ENCODE measurements at regions of chr11 and their contacts with region 1.

Region 1: GRCh38 chr11:65134386-65135253 is at the start of gene SYVN1:
- DNase-seq: peak; percentile 94
- H3K4me3 Mint-ChIP-seq: peak within 1 kb of the TSS; percentile 99
- H3K27ac Mint-ChIP-seq: peak within 1 kb of the TSS; percentile 99
- H3K4me1 Mint-ChIP-seq: peaks cover 31% of the 10 kb centered on the region
- H3K27me3 Mint-ChIP-seq: no peaks in the 10 kb centered on the region
- total RNA-seq, gene SYVN1: 24.5 to 26.2 TPM

Region 2: DNA sequence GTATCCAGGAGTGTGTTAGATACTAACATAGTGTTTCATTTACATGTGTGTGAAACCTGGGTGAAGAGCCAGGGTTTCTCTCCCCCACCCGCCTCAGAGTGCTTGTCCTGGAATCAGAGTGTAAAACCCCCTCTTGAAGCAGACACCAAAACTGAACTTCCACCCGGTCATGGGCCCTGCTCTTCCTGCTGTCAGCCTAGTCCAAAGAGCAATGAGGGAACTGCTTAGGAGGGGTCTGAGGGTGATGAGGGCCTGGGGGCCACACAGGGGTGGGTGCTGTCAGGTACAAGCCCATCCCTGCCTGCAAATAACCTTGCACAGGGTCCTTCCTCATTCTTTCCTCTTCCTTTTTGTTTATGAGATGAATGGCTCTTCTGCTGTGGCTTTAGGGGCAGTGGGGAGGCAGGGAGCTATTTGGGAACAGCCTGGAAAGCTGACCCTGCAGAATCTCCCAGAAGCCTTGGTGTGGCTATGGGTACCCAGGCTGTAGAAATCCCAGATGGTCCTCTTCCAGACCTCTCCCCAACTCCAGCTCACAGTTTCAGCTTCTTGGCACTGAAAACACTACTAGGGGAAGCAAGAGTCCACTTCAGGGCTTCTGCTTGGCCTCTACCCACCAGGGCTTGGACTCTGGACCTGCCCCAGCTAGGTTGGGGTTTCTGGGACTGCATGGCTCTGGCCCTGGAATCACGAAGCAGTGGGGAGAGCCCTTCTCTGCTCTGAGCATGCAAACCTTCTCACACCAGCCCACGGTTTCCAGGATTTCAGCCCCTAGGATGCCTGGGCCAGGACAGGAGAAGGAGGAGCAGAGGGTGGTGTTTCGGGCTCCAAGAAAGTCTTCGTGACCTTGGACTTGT is 146.4 kb before region 1 on chr11:
- CTCF ChIA-PET with region 1: no interaction called
- POLR2A ChIA-PET with region 1: no interaction called
- intact Hi-C with region 1: no loop called
- DNase-seq: no peak
- H3K4me3 Mint-ChIP-seq: no peak overlapping the region
- H3K27ac Mint-ChIP-seq: no peak overlapping the region
- H3K4me1 Mint-ChIP-seq: peaks cover 13% of the 10 kb centered on the region
- H3K27me3 Mint-ChIP-seq: peaks cover 2% of the 10 kb centered on the region

Region 3: DNA sequence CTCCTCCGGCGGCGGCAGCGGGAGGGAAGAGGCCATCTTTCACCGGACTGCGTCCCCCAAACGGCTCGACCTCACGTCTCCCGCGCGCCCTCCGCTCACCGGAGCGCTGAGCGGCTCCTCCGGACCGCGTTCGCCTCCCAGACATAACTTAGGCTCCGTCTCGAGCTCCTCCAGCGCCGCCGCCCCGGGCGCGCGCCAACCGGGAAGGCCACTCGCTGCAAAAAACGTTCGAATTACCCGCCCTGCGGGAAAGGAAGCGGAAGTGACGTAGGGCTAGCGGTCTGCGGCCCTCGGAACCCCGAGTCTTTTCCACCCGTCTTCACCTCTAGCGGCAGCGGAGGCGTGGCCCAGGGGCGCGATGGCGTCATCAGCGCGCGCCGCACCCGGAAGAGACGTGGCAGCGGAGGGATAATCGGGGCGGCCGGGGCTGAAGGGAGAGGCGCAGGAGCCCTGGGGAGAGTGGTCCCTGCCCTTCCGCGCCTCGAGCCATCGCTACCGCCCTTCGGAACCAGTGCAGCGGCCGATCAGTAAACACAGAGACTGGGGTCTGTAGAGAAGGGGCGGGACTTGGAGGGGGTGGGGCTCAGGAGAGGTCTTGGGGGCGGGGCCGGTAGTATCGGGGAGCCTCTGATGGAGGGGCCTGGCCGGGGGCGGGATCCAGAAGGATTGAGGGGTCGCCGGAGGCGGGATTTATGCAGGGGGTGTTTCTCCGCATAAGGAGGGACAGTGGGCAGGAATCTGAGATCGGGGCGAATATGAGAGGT is 50.6 kb before region 1 on chr11 and contains the starts of genes CDCA5 and ZFPL1:
- CTCF ChIA-PET with region 1: no interaction called
- POLR2A ChIA-PET with region 1: no interaction called
- intact Hi-C with region 1: loop called (anchors 1 kb)
- DNase-seq: peak; percentile 97
- H3K4me3 Mint-ChIP-seq: peak within 1 kb of the TSS; percentile 99
- H3K27ac Mint-ChIP-seq: peak within 1 kb of the TSS; percentile 96
- H3K4me1 Mint-ChIP-seq: peaks cover 36% of the 10 kb centered on the region
- H3K27me3 Mint-ChIP-seq: no peaks in the 10 kb centered on the region
- total RNA-seq, gene CDCA5: 111 to 112 TPM
- total RNA-seq, gene ZFPL1: 28.3 to 31.3 TPM

Region 4: DNA sequence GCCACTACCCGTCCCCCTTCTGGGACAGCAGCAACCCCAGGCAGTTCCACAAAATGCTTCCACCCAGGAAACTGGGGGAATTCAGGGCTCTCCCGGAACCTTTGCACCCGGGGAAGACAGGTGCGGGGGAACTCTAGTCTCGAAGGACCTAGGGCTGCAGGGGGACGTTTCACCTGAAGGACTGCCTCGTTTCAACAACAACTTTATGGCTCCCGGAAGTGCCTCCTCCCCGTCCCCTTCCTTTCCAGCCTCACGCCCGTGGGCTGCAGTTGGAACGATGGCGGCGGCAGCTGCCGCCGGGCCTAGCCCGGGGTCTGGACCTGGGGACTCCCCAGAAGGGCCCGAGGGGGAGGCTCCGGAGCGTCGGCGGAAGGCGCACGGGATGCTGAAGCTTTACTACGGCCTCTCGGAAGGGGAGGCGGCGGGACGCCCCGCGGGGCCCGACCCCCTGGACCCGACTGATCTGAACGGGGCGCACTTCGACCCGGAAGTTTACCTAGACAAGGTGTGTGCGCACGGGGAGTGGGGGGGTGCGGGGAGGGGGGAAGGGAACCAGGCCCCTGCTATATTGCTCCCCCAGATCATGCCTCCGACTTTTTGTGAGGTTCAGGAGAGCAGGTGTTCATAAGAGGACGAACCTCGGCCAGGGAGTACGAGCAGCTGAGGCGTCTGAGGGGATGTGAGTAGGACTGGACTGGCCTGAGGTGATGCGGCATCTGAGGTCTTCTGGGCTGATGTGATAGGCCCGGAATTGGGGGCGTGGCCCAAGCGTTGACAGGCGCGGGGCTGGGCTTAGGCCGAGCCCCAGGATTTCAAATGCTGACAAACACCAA is 38.4 kb before region 1 on chr11 and contains the start of gene VPS51:
- CTCF ChIA-PET with region 1: no interaction called
- POLR2A ChIA-PET with region 1: interaction called, 6 read pairs
- intact Hi-C with region 1: loop called (anchors 1 kb)
- DNase-seq: peak; percentile 91
- H3K4me3 Mint-ChIP-seq: peak within 1 kb of the TSS; percentile 93
- H3K27ac Mint-ChIP-seq: peak within 1 kb of the TSS; percentile 97
- H3K4me1 Mint-ChIP-seq: peaks cover 17% of the 10 kb centered on the region
- H3K27me3 Mint-ChIP-seq: no peaks in the 10 kb centered on the region
- total RNA-seq, gene VPS51: 97.1 to 99.2 TPM

Region 5: GRCh38 chr11:65111744-65112414 is 22.7 kb before region 1 on chr11 and contains the start of gene TM7SF2:
- CTCF ChIA-PET with region 1: interaction called, 24 read pairs
- POLR2A ChIA-PET with region 1: interaction called, 15 read pairs
- intact Hi-C with region 1: loop called (anchors 2 kb)
- DNase-seq: peak; percentile 96
- H3K4me3 Mint-ChIP-seq: peak within 1 kb of the TSS; percentile 84
- H3K27ac Mint-ChIP-seq: peak within 1 kb of the TSS; percentile 80
- H3K4me1 Mint-ChIP-seq: peaks cover 56% of the 10 kb centered on the region
- H3K27me3 Mint-ChIP-seq: no peaks in the 10 kb centered on the region
- total RNA-seq, gene TM7SF2: 19.2 to 21.0 TPM

Region 6: DNA sequence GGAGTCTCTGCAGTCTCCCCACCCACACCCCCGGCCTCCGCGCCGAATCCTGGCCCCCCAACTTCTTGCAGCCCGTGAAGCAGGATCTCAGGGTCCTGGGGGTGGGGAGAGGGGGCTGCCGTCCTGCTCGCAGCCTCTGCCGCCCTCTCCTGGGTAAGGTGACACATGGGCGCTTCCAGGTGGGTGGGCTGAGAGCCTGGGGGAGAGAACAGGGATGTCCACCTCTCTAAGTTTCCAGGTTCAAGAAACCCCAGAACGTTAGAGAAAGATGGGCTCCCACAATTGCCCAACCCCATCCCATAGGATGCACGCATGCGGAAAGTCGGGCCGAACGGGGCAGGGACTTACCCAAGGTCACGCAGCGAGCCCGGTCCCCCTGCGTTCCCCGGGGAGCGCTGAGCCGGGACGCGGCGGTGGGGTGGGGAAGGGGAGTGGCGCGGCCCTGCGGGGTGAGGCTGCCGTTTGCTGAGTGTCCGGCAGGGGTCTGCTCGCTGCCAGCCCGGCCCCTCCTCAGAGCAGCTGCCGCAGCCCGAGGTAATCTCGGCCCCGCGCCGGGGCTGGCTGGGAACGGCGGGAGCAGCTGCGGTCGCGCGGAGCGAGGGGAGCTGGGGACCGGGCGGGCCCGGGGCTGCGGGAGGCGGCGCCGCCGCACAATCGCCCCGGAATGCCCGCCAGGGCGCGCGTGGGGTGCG is 46.4 kb after region 1 on chr11:
- CTCF ChIA-PET with region 1: interaction called, 18 read pairs
- POLR2A ChIA-PET with region 1: interaction called, 16 read pairs
- intact Hi-C with region 1: loop called (anchors 1 kb)
- DNase-seq: peak; percentile 74
- H3K4me3 Mint-ChIP-seq: peak overlapping the region; percentile 87
- H3K27ac Mint-ChIP-seq: no peak overlapping the region
- H3K4me1 Mint-ChIP-seq: peaks cover 20% of the 10 kb centered on the region
- H3K27me3 Mint-ChIP-seq: no peaks in the 10 kb centered on the region

Region 7: GRCh38 chr11:65261591-65262380 is 127.2 kb after region 1 on chr11 and contains the start of gene POLA2:
- CTCF ChIA-PET with region 1: no interaction called
- POLR2A ChIA-PET with region 1: interaction called, 14 read pairs
- intact Hi-C with region 1: loop called (anchors 10 kb)
- DNase-seq: peak; percentile 98
- H3K4me3 Mint-ChIP-seq: peak within 1 kb of the TSS; percentile 94
- H3K27ac Mint-ChIP-seq: peak within 1 kb of the TSS; percentile 94
- H3K4me1 Mint-ChIP-seq: peaks cover 36% of the 10 kb centered on the region
- H3K27me3 Mint-ChIP-seq: no peaks in the 10 kb centered on the region
- total RNA-seq, gene POLA2: 62.9 to 66.9 TPM